Psoas muscle (tissue), 8 donors: ENCODE measurements at regions of chr6 and their contacts with region 1.

Region 1: GRCh38 chr6:28443112-28443773 is at the start of gene ZSCAN23:
- DNase-seq: peak; percentile 68 to 76
- ATAC-seq: peak; percentile 55 to 95 (median 82)
- H3K4me3 ChIP-seq: peak within 1 kb of the TSS; percentile 79
- H3K27ac ChIP-seq: no peak within 1 kb of the TSS
- H3K4me1 ChIP-seq: no peaks in the 10 kb centered on the region
- H3K27me3 ChIP-seq: peaks cover 0 to 44% (median 3%) of the 10 kb centered on the region in 3 donors
- CTCF ChIP-seq: no peak
- total RNA-seq, gene ZSCAN23: 0.37 to 0.75 (median 0.44) TPM in 3 of 4 donors, not detected in the other

Region 2: GRCh38 chr6:28080631-28081485 is 362.4 kb before region 1 on chr6:
- intact Hi-C with region 1: loop called in 1 of 2 experiments (anchors 2 kb)
- DNase-seq: peak; percentile 92 to 96
- ATAC-seq: peak; percentile 98 to 99 (median 99)
- H3K4me3 ChIP-seq: peak overlapping the region; percentile 93
- H3K27ac ChIP-seq: peak overlapping the region; percentile 84
- H3K4me1 ChIP-seq: peaks cover 8% of the 10 kb centered on the region
- H3K27me3 ChIP-seq: no peaks in the 10 kb centered on the region
- CTCF ChIP-seq: no peak